Ascending aorta (tissue), 2 donors: ENCODE measurements at regions of chr3 and their contacts with region 1.

Region 1: DNA sequence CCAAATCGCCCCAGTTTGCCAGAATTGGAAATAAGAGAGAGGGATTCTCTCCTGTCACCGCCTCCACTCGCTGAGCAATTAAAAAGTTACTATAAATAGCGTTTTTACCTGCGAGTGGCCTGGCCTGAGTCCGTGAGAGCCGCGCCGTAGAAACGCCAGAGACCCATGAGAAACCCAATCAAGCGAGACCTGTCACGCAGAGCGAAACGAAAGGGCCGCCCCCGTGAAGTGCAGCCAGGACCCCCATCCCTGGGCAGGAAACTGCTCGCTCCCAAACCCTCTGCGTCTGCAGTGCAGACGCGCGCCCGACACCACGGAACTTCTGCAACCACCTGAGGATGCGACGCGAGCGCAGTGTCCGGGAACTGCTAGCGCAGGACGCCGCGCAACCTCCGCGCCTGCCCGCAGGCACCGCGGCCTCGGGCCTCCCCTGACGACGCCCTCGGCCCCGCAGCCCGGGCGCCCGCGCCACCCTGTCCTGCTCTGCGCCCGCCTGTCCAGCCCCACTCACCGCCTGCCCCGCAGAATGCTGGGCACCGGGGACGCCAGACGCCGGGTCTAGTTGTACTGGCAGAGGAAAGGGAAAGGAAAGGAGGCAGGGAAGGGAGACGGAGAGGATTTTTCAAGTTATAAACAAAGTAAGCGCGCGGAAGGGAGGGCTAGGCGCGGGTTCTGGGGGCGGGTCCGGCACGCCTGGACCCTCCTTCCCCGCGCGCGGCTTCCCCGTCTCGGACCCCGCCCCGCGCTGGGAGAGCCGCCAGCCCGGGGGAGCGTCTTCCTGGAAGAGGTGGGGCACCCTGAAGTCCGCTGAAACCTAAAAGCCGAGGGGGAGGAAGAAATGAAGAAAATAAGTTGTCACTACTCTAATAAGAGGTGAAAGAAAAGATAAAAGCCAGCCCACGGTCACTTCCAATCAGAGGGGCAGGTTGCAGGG is at the start of gene PLSCR4:
- DNase-seq: peak in 1 of 2 donors; percentile 89
- H3K4me3 ChIP-seq: peak within 1 kb of the TSS; percentile 89 to 97
- H3K27ac ChIP-seq: peak within 1 kb of the TSS; percentile 96 to 100
- H3K4me1 ChIP-seq: peaks cover 0 to 5% of the 10 kb centered on the region in 2 donors
- H3K27me3 ChIP-seq: no peaks in the 10 kb centered on the region
- CTCF ChIP-seq: no peak
- total RNA-seq, gene PLSCR4: 87.2 TPM

Region 2: GRCh38 chr3:146072824-146073223 is 177.9 kb before region 1 on chr3:
- intact Hi-C with region 1: no loop called
- DNase-seq: no peak
- H3K4me3 ChIP-seq: no peak overlapping the region
- H3K27ac ChIP-seq: peak overlapping the region in 1 of 2 donors; percentile 16
- H3K4me1 ChIP-seq: peaks cover 0 to 8% of the 10 kb centered on the region in 2 donors
- H3K27me3 ChIP-seq: no peaks in the 10 kb centered on the region
- CTCF ChIP-seq: no peak

Region 3: GRCh38 chr3:146189519-146190173 is 61.1 kb before region 1 on chr3:
- intact Hi-C with region 1: no loop called
- DNase-seq: no peak
- H3K4me3 ChIP-seq: no peak overlapping the region
- H3K27ac ChIP-seq: no peak overlapping the region
- H3K4me1 ChIP-seq: no peaks in the 10 kb centered on the region
- H3K27me3 ChIP-seq: no peaks in the 10 kb centered on the region
- CTCF ChIP-seq: peak; percentile 54 to 77 (median 76)

Region 4: DNA sequence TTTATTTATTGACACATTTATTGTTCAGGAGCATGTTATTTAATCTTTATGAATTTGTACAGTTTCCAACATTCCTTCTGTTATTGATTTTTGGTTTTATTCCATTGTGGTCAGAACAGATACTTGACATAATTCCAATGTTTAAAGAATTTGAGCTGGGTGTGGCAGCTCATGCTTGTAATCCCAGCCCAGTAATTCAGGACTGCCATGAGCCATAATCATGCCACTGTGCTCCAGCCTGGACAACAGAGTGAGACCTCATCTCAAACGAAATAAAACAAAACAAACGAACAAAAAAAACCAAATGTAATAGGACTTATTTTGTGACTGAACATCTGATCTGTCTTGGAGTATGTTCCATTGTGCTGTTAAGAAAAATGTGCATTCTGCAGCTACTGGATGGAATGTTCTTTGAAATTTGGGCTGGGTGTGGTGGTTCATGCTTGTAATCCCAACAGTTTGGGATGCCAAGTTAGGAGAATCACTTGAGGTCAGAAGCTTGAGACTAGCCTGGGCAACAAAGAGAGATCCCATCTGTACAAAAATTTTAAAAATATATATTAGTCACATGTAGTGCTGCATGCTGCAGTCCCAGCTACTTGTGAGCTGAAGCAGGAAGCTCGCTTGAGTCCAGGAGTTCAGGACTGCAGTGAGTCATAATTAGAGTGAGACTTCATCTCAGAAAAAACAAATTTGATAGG is 62.8 kb after region 1 on chr3:
- intact Hi-C with region 1: loop called (anchors 5 kb)
- DNase-seq: no peak
- H3K4me3 ChIP-seq: no peak overlapping the region
- H3K27ac ChIP-seq: peak overlapping the region; percentile 37 to 41
- H3K4me1 ChIP-seq: peaks cover 0 to 18% of the 10 kb centered on the region in 2 donors
- H3K27me3 ChIP-seq: no peaks in the 10 kb centered on the region
- CTCF ChIP-seq: no peak

Region 5: GRCh38 chr3:146491303-146491702 is 240.6 kb after region 1 on chr3:
- intact Hi-C with region 1: no loop called
- DNase-seq: no peak
- H3K4me3 ChIP-seq: no peak overlapping the region
- H3K27ac ChIP-seq: no peak overlapping the region
- H3K4me1 ChIP-seq: no peaks in the 10 kb centered on the region
- H3K27me3 ChIP-seq: no peaks in the 10 kb centered on the region
- CTCF ChIP-seq: no peak

Region 6: GRCh38 chr3:146865175-146865755 is 614.5 kb after region 1 on chr3:
- intact Hi-C with region 1: no loop called
- DNase-seq: no peak
- H3K4me3 ChIP-seq: no peak overlapping the region
- H3K27ac ChIP-seq: no peak overlapping the region
- H3K4me1 ChIP-seq: no peaks in the 10 kb centered on the region
- H3K27me3 ChIP-seq: no peaks in the 10 kb centered on the region
- CTCF ChIP-seq: no peak